ENCODE measurements at regions of chr3 and their contacts with region 1.

Region 1: DNA sequence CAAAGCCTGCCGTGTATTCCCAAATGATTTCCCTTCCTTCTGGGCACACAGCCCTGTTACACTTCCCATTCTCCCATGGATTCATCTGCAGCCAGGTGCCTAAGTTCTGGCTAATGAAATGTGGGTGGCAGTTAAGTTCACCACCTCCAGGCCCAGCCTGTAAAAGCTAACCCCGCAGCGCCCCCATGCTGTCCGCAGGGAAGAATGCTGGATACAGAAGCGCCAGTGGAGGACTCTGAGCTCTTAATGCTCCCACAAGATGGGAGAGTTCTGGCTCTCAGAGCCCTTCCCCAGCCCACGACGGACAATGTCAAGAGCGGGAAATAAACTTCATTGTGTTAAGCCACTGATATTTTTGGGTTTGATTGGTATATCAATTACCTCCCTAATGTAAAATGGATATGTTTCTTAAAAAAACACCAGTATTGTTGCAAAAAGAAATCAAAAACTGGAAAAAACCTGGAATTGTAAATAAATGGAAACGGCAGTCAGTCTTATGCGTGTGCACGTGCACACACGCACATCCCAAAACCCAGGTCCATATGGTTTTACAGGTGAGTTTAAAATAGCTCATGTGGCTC is 37.7 kb upstream of the FGD5 start:
- DNase-seq: peak; percentile 65 to 77
- ATAC-seq: peak; percentile 95 to 99
- H3K4me3 ChIP-seq: no peak overlapping the region
- H3K27ac ChIP-seq: no peak overlapping the region
- H3K4me1 ChIP-seq: no peaks in the 10 kb centered on the region
- CTCF ChIP-seq: peak; percentile 60
- EP300 ChIP-seq: no peak
- POLR2A ChIP-seq: no peak
- RAD21 ChIP-seq: peak; percentile 67 to 82

Region 2: GRCh38 chr3:14640157-14640562 is 140.9 kb before region 1 on chr3:
- CTCF ChIA-PET with region 1: no interaction called
- POLR2A ChIA-PET with region 1: no interaction called
- DNase-seq: peak; percentile 15 to 31
- ATAC-seq: peak; percentile 52 to 65; a peak in 3 of 6 replicates
- H3K4me3 ChIP-seq: no peak overlapping the region
- H3K27ac ChIP-seq: no peak overlapping the region
- H3K4me1 ChIP-seq: peaks cover 7% of the 10 kb centered on the region
- CTCF ChIP-seq: no peak
- EP300 ChIP-seq: no peak
- POLR2A ChIP-seq: no peak
- RAD21 ChIP-seq: no peak

Region 3: DNA sequence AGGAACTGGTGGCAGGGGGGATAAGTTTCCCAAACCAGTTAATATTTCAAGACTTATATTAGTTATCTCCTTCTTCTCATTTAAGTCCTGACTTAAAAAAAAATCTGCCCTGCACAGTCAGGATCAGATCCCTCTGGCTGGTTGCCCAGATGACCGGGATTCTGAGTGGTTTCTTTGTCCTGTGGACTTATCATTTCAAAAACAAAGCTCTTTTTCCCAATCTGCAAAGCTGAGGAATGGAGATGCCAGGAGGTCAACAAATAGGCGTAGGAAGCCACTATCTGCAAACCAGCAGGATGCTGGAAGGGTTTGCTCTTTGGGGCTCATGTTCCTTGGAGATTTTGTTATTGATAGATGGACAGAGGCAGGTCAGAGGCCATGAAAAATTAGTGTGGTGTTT is 100.3 kb before region 1 on chr3:
- CTCF ChIA-PET with region 1: interaction called, 11 read pairs
- POLR2A ChIA-PET with region 1: no interaction called
- DNase-seq: no peak
- ATAC-seq: no peak
- H3K4me3 ChIP-seq: no peak overlapping the region
- H3K27ac ChIP-seq: no peak overlapping the region
- H3K4me1 ChIP-seq: no peaks in the 10 kb centered on the region
- CTCF ChIP-seq: no peak
- EP300 ChIP-seq: no peak
- POLR2A ChIP-seq: no peak
- RAD21 ChIP-seq: no peak

Region 4: GRCh38 chr3:14716591-14716990 is 64.4 kb before region 1 on chr3:
- CTCF ChIA-PET with region 1: no interaction called
- POLR2A ChIA-PET with region 1: no interaction called
- DNase-seq: no peak
- ATAC-seq: no peak; a peak in 1 of 6 replicates
- H3K4me3 ChIP-seq: no peak overlapping the region
- H3K27ac ChIP-seq: no peak overlapping the region
- H3K4me1 ChIP-seq: no peaks in the 10 kb centered on the region
- CTCF ChIP-seq: no peak
- EP300 ChIP-seq: no peak
- POLR2A ChIP-seq: no peak
- RAD21 ChIP-seq: no peak

Region 5: DNA sequence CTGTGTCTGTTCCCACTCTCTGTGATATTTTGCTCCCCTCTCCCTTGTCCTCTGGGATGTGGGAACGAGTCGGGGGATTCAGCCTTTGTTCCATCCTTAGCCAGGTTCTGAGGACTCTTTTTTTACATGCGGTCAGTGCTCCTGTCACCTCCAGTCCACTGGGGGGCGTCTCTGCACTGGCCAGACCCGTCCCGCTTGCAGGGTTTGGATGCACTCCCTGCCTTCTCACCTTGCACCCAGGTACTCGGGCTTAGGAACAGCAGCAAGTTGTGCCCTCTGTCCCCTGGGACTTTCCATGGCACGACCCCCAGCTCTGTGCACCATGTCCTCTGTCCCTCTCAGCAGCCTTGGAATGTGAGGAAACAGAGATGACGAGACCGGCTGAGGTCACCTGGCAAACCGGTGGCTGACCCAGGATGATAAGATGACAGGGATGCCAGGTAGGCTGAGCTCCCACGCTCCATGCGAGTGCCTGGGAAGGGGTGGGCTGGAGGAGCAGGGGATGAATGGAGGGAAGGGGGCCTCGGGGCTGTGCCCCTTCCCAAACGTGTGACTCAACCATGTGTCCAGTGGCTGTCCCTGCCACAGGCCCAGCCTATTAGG is 10.4 kb after region 1 on chr3:
- CTCF ChIA-PET with region 1: interaction called, 21 read pairs
- POLR2A ChIA-PET with region 1: no interaction called
- DNase-seq: peak; percentile 62 to 76
- ATAC-seq: peak; percentile 73 to 94
- H3K4me3 ChIP-seq: no peak overlapping the region
- H3K27ac ChIP-seq: no peak overlapping the region
- H3K4me1 ChIP-seq: no peaks in the 10 kb centered on the region
- CTCF ChIP-seq: peak; percentile 78
- EP300 ChIP-seq: no peak
- POLR2A ChIP-seq: no peak
- RAD21 ChIP-seq: peak; percentile 81 to 87